ENCODE measurements at regions of chr6 and their contacts with region 1.

Region 1: GRCh38 chr6:56902641-56903464 is 52.1 kb upstream of the BEND6 start:
- DNase-seq: no peak
- ATAC-seq: peak; percentile 27 to 72

Region 2: DNA sequence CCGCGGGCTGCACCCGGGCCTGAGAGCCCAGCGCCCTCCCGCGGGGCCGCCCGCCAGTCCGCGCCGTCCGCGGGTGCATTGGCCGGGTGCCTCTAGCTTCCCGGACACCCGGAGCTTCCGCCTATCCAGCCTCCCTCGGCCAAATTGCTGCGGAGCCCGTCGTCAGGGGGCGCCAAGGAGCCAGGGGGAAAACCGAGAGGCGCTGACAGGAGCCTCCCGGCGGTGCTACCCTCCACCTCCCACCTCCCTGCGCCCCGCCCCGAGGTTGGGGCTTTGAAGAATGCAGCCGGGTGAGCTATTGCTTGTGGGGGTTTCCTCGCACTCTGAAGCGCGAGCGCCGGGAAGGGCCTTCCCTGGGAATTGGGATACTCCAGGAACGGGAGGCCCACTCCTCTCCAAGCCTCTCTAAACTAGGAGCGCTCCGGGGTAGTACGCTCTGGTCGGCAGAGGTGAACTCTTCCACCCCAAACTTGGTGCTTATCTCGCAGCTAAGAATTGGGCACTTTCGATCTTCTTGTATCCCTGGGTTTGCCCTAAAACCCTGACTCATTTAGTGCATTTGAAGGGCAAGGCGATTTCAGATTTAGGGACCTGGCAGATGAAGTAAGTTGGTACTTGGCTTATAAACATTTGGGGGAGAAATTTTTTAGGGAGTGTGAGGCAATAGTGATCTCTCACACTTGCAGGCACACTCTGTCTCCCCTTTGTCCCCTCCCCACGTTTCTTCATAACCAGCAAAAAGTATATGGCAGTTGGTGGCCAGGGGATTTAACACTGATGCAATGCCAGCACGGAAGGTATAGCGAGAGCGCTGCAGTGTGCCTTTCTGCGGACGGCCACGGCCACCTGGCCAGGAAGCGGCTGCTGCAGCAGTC is 52.6 kb after region 1 on chr6:
- intact Hi-C with region 1: loop called in 1 of 2 experiments (anchors 2 kb)
- DNase-seq: peak; percentile 73
- ATAC-seq: peak; percentile 77 to 84

Region 3: GRCh38 chr6:57021086-57021720 is 118.3 kb after region 1 on chr6:
- intact Hi-C with region 1: loop called (anchors 2 to 10 kb)
- DNase-seq: no peak
- ATAC-seq: peak in 1 of 2 donors; percentile 60

Region 4: DNA sequence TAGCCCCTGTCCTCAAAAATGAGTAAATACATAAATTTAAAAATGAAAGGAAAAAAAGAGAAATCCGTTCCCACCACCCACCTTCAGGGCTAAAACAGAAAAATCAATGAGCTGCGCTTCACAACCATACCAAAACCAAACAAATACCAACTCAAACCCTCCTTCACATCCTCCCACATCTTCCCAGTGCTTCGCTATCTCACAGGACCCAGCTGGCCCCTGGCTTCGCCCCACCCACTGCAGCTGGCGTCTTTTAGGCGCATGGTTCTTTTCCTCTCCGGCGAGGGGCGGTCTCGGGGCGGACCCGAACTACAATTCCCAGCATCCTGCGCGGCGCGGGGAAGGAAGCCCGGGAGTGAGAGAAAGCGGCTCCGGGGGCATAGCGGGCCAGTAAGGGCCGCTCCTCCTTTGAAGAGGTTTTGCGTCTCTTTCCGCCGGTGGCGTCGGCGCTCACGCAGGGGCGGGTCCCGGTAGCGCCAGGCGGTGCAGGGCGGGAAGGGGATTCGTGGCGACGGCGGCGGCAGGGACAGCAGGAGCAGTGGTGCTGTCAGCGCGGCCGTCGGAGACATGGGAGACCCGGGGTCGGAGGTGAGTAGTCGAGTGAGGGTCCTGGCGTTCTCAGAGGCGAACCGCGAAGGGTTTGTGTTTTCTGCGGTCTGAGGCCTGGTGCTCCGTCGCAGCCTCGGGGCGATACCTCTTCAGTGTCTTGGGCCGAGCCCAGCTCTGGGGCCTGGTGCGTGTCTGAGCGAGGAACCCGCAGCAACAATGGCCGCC is 187.0 kb after region 1 on chr6 and contains the start of gene ZNF451:
- intact Hi-C with region 1: no loop called
- DNase-seq: peak; percentile 99
- ATAC-seq: peak; percentile 98 to 99
- total RNA-seq, gene ZNF451: 25.0 to 36.6 TPM

Region 5: GRCh38 chr6:57316581-57317059 is 413.8 kb after region 1 on chr6:
- intact Hi-C with region 1: loop called in 1 of 2 experiments (anchors 2 kb)
- DNase-seq: peak; percentile 84
- ATAC-seq: peak; percentile 91 to 95

Measured in left cardiac atrium (tissue), 4 donors.